GM13977 (cell line): ENCODE measurements at regions of chr17 and their contacts with region 1.

Region 1: GRCh38 chr17:21511363-21512198 is 135.4 kb downstream of the KCNJ12 start:
- DNase-seq: peak; percentile 75
- CTCF ChIP-seq: peak; percentile 73

Region 2: DNA sequence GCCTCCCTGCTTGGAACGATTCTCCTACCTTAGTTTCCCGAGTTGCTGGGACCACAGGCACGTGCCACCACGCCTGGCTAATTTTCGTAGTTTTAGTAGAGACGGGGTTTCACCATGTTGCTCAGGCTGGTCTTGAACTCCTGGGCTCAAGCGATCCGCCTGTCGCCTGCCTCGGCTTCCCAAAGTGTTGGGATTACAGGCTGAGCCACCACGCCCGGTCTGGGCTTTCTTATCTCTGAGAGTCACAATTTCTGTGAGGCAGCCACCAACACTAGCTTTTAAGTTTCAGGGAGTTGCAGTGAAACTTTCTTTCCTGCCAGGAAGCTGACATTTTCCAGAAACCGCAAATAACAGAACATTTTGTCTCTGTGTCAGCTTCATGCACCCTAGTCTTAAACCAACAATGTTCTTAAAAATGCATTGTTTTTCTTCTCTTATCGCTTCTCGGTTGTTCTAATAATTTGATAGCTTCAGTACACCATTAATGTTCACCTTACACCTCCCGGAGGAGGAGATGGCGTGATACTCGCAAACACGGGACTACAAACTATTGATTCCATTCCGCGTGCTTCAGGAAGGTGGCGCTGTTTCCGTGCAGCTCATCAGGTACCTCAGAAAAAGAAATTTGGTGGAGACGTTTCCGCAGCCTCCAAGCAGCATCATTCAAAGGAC is 392.2 kb before region 1 on chr17:
- in situ Hi-C with region 1: loop called (anchors 25 kb)
- DNase-seq: peak; percentile 78
- CTCF ChIP-seq: peak; percentile 92

Region 3: DNA sequence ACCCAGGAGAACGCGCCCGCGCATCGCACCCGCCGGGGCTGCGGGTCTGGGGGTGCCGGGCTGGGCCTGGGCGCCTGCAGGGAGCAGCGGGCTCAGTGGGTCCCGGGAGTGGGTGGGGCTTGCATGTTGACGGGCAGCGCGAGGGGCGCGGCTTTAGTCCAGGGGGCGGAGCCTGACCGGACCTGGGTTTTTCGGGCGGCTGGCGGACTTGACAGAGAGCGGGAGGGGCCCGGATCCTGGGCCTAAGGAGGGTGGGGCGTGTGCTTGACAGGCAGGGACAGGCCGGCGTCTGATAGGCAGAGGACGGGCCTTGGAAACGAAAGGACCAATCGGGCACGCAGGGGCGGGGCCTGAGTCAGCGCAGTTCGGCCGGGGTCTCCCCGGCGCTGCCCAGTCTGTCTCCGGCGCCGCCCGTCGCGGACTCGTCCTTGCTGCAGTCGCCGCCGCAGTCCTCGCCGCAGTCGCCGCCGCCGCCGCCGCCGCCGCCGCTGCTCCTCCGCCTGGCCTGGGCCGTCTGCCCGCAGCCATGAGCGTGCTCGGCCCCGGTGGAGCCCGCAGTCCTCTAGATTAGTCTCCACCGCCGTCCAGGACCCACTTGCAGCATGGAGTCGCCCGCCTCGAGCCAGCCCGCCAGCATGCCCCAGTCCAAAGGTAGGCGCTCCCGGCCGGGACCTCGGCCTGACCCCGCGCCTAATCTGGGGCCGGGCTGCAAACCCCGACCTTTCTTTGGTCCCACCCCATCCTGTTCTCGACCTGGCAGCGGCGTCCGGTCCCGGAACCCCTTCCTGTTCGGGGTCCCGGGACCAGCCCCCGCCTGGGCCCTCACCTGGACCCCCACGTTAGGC is 227.0 kb before region 1 on chr17 and contains the start of gene MAP2K3:
- in situ Hi-C with region 1: loop called (anchors 25 kb)
- DNase-seq: peak; percentile 100
- CTCF ChIP-seq: no peak

Region 4: DNA sequence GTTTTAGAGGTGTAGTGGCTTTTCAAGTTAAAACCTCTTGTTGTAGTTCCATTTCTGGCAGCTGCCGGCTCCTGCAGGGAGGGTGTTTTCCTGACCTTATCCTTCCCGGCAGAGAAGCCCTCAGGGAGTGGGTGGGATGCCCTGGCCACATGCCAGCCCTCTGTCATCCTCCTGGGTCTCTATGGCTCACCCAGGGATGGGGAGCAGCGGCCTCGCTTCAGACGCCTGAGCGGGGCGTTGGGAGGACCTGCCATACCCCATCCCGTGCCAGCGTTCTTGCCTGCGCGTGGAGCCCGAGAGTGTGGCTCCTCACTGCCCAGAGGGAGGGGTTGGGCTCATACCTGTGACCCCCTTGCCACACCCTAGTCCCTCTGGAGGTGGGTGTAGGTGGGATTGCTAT is 123.5 kb before region 1 on chr17:
- in situ Hi-C with region 1: no loop called
- DNase-seq: no peak
- CTCF ChIP-seq: no peak

Region 5: GRCh38 chr17:21564262-21564661 is 52.7 kb after region 1 on chr17:
- in situ Hi-C with region 1: no loop called
- DNase-seq: no peak
- CTCF ChIP-seq: no peak